HepG2 (cell line): ENCODE measurements at regions of chr7 and their contacts with region 1.

Region 1: GRCh38 chr7:157138424-157139110 is at the start of gene UBE3C:
- DNase-seq: peak; percentile 74
- ATAC-seq: peak; percentile 84
- H3K4me3 ChIP-seq: peak within 1 kb of the TSS; percentile 79 to 93 (median 88)
- H3K27ac ChIP-seq: peak within 1 kb of the TSS; percentile 89
- H3K4me1 ChIP-seq: peaks cover 53% of the 10 kb centered on the region
- H3K27me3 ChIP-seq: no peaks in the 10 kb centered on the region; a peak in 1 of 5 replicates
- CTCF ChIP-seq: no peak
- EP300 ChIP-seq: no peak
- POLR2A ChIP-seq: peak; percentile 46 to 84; a peak in 3 of 4 replicates
- RAD21 ChIP-seq: peak; percentile 54; the same call in 1 of the 2 replicates
- total RNA-seq, gene UBE3C: 48.2 and 49.8 TPM in 2 replicates

Region 2: DNA sequence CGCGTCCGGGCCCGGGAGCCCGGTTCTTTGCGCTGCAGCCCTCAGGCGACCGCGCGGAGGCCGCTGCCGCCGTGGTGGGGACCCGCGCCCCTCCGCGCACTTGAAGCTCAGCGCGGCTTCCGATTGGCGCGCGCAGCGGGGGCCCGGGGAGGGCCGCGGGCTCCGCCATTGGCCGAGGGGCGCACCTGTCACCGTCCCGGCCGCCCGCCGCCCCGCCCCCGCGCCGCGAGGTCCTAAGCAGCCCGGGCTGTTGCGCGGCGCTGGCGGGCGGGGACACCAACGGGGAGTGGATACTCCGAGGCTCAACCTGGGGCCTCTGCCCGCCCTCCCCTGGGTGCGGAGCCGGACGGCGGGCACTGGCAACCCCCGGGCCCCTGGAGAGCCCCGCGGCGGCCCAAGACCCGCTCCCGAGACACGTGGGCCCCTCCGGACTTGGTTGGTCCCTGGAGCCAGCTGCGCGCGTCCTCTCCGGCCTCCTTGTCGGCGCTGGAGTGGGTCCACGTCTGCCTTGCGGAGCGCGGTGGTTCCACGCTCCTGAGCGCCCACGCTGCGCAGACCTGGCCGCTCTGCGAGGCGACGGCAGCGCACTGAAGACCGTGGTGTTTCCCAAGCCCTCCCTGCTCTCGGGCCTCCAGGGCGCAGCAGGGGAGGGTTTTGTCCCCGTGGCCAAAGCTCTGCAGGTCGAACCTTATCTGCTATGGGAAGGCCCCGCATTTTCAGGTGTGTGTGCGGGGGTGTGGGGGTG is 127.8 kb before region 1 on chr7 and contains the start of gene MNX1:
- CTCF ChIA-PET with region 1: no interaction called
- POLR2A ChIA-PET with region 1: interaction called, 3 read pairs
- in situ Hi-C with region 1: no loop called
- intact Hi-C with region 1: loop called (anchors 10 kb)
- DNase-seq: peak; percentile 57
- ATAC-seq: peak; percentile 80
- H3K4me3 ChIP-seq: peak within 1 kb of the TSS; percentile 65 to 75 (median 67); a peak in 5 of 6 replicates
- H3K27ac ChIP-seq: peak within 1 kb of the TSS; percentile 83
- H3K4me1 ChIP-seq: peaks cover 66% of the 10 kb centered on the region
- H3K27me3 ChIP-seq: peaks cover 6 to 51% of the 10 kb centered on the region in 2 experiments; a peak in 4 of 5 replicates
- CTCF ChIP-seq: no peak
- EP300 ChIP-seq: no peak
- POLR2A ChIP-seq: peak in 1 of 2 experiments; percentile 67; a peak in 3 of 4 replicates
- RAD21 ChIP-seq: no peak
- total RNA-seq, gene MNX1: 3.6 and 6.1 TPM in 2 replicates

Region 3: GRCh38 chr7:157526005-157526912 is 387.7 kb after region 1 on chr7:
- CTCF ChIA-PET with region 1: no interaction called
- POLR2A ChIA-PET with region 1: no interaction called
- in situ Hi-C with region 1: no loop called
- intact Hi-C with region 1: no loop called
- DNase-seq: no peak
- ATAC-seq: peak; percentile 38
- H3K4me3 ChIP-seq: no peak overlapping the region
- H3K27ac ChIP-seq: no peak overlapping the region
- H3K4me1 ChIP-seq: no peaks in the 10 kb centered on the region
- H3K27me3 ChIP-seq: peaks cover 13 to 98% of the 10 kb centered on the region in 2 experiments
- CTCF ChIP-seq: no peak
- EP300 ChIP-seq: no peak
- POLR2A ChIP-seq: no peak
- RAD21 ChIP-seq: no peak